GM12878 (cell line): ENCODE measurements at regions of chr3 and their contacts with region 1.

Region 1: DNA sequence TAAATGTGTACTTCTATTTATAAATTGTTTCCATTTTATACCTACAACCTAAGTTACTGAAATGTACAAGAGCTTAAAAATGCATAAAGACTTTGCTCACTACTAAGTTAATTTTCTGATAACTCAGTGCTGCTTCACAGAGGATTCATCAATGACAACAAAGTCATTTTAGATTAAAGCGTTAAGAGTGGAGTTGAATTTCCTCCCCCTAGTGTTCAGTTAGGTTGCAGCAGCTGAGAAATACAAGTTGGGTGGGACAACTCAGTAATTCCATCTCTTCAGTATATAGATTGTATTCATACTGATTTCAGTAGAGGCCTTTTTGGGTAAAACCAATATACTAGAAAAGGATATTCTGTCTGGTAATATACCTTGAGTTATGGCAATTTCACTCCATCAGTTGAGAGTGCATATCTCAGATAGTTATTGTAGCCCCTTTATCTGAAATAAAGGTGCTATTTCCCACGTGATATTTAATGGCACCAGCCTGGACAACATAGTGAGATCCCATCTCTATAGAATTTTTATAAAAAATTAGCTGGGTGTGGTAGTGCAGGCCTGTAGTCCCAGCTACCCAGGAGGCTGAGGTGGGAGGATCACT is 6.9 kb upstream of the RPL35A start:
- DNase-seq: no peak
- ATAC-seq: peak; percentile 86
- H3K4me3 ChIP-seq: no peak overlapping the region
- H3K27ac ChIP-seq: no peak overlapping the region
- H3K4me1 ChIP-seq: no peaks in the 10 kb centered on the region
- H3K27me3 ChIP-seq: no peaks in the 10 kb centered on the region
- CTCF ChIP-seq: peak; percentile 63 to 78 (median 71)
- EP300 ChIP-seq: no peak
- POLR2A ChIP-seq: no peak
- RAD21 ChIP-seq: peak; percentile 66

Region 2: DNA sequence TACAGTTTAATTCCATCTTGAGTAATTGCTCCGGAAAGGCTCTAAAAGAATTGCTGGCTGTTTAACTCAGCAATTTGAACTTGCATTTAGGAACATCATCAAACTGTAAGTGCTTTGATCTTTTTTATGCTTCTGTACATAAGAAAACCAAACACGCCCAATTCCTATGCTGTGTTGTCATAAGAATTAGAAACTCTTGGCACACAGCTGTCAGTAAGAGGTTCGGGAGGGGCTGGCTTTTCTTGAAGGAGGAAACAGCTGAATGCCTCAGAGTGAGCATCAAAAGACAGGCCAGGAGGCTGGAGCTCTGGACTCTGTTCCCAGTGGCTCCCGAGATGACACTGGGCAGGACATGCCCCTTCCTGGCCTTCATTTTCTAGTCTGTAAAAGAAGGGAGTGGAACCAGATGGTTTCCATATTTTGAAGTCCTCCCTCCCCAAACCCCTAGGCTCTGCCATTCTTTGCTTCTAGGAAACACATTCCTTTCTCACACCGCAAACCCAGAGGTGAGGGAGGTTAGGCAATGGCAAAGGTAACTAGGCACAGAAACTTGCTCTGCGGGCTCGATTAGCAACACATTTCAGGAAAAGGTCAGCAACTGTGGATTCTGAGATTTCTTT is 570.9 kb before region 1 on chr3:
- CTCF ChIA-PET with region 1: no interaction called
- POLR2A ChIA-PET with region 1: no interaction called
- RAD21 ChIA-PET with region 1: no interaction called
- SMC1A ChIA-PET with region 1: no interaction called
- in situ Hi-C with region 1: no loop called
- intact Hi-C with region 1: no loop called
- DNase-seq: no peak
- ATAC-seq: no peak
- H3K4me3 ChIP-seq: no peak overlapping the region
- H3K27ac ChIP-seq: no peak overlapping the region
- H3K4me1 ChIP-seq: no peaks in the 10 kb centered on the region; the same call in 1 of the 2 replicates
- H3K27me3 ChIP-seq: no peaks in the 10 kb centered on the region
- CTCF ChIP-seq: no peak
- EP300 ChIP-seq: no peak
- POLR2A ChIP-seq: no peak
- RAD21 ChIP-seq: no peak

Region 3: GRCh38 chr3:197926418-197926817 is 16.6 kb before region 1 on chr3:
- CTCF ChIA-PET with region 1: interaction called, 12 read pairs
- POLR2A ChIA-PET with region 1: no interaction called
- RAD21 ChIA-PET with region 1: no interaction called
- SMC1A ChIA-PET with region 1: no interaction called
- in situ Hi-C with region 1: no loop called
- intact Hi-C with region 1: no loop called
- DNase-seq: no peak
- ATAC-seq: no peak
- H3K4me3 ChIP-seq: no peak overlapping the region
- H3K27ac ChIP-seq: no peak overlapping the region
- H3K4me1 ChIP-seq: no peaks in the 10 kb centered on the region
- H3K27me3 ChIP-seq: no peaks in the 10 kb centered on the region
- CTCF ChIP-seq: peak in 2 of 3 experiments; percentile 11; a peak in 1 of 6 replicates
- EP300 ChIP-seq: no peak
- POLR2A ChIP-seq: no peak
- RAD21 ChIP-seq: no peak